ENCODE measurements at regions of chrX and their contacts with region 1.

Region 1: DNA sequence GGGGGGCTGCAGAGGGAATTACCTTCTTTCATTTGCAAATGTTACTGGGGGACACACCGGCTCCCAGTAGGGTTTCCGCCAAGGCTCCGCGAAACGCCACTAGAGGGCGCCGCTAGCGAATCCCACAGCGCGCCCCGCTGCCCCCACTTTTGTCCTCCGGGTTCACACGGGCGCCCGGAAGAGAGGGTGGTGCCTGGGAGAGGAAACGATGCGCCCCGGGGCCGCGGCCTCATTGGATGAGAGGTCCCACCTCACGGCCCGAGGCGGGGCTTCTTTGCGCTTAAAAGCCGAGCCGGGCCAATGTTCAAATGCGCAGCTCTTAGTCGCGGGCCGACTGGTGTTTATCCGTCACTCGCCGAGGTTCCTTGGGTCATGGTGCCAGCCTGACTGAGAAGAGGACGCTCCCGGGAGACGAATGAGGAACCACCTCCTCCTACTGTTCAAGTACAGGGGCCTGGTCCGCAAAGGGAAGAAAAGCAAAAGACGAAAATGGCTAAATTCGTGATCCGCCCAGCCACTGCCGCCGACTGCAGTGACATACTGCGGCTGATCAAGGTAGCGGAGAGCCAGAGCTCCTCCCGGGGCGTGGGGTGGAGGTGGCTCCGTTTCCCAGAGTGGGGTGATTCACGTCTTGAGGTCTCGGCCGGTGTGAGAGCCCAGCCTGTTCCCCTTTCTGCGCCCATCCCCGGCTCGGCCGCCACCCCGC is at the start of gene SAT1:
- DNase-seq: peak; percentile 96
- H3K4me3 Mint-ChIP-seq: peak within 1 kb of the TSS; percentile 84
- H3K27ac Mint-ChIP-seq: peak within 1 kb of the TSS; percentile 95
- H3K4me1 Mint-ChIP-seq: peaks cover 29% of the 10 kb centered on the region
- H3K27me3 Mint-ChIP-seq: no peaks in the 10 kb centered on the region
- total RNA-seq, gene SAT1: 629 to 649 TPM

Region 2: GRCh38 chrX:23263892-23264291 is 519.1 kb before region 1 on chrX:
- CTCF ChIA-PET with region 1: no interaction called
- intact Hi-C with region 1: no loop called
- DNase-seq: no peak
- H3K4me3 Mint-ChIP-seq: no peak overlapping the region
- H3K27ac Mint-ChIP-seq: no peak overlapping the region
- H3K4me1 Mint-ChIP-seq: no peaks in the 10 kb centered on the region
- H3K27me3 Mint-ChIP-seq: no peaks in the 10 kb centered on the region

Region 3: GRCh38 chrX:23644744-23645143 is 138.3 kb before region 1 on chrX:
- CTCF ChIA-PET with region 1: no interaction called
- intact Hi-C with region 1: no loop called
- DNase-seq: no peak
- H3K4me3 Mint-ChIP-seq: no peak overlapping the region
- H3K27ac Mint-ChIP-seq: no peak overlapping the region
- H3K4me1 Mint-ChIP-seq: no peaks in the 10 kb centered on the region
- H3K27me3 Mint-ChIP-seq: no peaks in the 10 kb centered on the region

Region 4: DNA sequence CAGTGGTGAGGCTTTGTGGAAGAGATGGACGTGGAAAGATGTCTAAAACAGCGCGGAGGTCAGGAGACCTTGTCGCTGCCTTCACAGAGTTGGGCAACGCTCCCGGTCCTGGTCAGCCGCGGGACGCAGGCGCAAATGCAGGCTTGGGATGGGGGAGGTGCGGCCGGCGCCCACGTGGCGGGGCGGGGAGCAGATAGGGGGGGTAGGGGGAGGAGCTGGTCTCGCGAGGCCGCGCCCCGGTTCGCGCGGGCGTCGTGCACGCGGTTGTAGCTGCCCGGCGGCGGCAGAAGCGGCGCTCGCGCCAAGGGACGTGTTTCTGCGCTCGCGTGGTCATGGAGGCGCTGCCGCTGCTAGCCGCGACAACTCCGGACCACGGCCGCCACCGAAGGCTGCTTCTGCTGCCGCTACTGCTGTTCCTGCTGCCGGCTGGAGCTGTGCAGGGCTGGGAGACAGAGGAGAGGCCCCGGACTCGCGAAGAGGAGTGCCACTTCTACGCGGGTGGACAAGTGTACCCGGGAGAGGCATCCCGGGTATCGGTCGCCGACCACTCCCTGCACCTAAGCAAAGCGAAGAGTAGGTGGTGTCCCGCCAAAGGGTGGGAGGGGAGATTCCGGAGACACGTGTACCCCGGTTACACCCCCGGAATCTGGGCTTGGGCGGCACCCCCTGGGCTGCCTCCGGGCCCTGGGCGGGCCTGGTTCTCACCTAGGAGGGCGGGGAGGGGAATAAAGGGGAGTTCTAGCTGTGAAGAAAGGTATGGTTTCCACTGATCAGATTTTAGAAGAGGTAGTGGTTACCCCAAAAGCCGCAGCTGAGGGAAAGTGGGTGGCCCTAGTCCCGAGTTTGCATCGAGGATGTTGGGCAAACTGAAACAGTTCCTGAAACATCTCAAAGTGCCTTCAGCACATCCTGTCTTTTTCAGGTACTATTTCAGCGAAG is 115.5 kb before region 1 on chrX and contains the start of gene PRDX4:
- CTCF ChIA-PET with region 1: no interaction called
- intact Hi-C with region 1: loop called (anchors 1 kb)
- DNase-seq: peak; percentile 82
- H3K4me3 Mint-ChIP-seq: peak within 1 kb of the TSS; percentile 84
- H3K27ac Mint-ChIP-seq: peak within 1 kb of the TSS; percentile 90
- H3K4me1 Mint-ChIP-seq: peaks cover 30% of the 10 kb centered on the region
- H3K27me3 Mint-ChIP-seq: no peaks in the 10 kb centered on the region
- total RNA-seq, gene PRDX4: 39.6 to 40.0 TPM

Region 5: GRCh38 chrX:23756157-23756559 is 26.9 kb before region 1 on chrX:
- CTCF ChIA-PET with region 1: interaction called, 8 read pairs
- intact Hi-C with region 1: loop called (anchors 1 kb)
- DNase-seq: peak; percentile 75
- H3K4me3 Mint-ChIP-seq: peak overlapping the region; percentile 24
- H3K27ac Mint-ChIP-seq: peak overlapping the region; percentile 66
- H3K4me1 Mint-ChIP-seq: peaks cover 8% of the 10 kb centered on the region
- H3K27me3 Mint-ChIP-seq: no peaks in the 10 kb centered on the region

Region 6: DNA sequence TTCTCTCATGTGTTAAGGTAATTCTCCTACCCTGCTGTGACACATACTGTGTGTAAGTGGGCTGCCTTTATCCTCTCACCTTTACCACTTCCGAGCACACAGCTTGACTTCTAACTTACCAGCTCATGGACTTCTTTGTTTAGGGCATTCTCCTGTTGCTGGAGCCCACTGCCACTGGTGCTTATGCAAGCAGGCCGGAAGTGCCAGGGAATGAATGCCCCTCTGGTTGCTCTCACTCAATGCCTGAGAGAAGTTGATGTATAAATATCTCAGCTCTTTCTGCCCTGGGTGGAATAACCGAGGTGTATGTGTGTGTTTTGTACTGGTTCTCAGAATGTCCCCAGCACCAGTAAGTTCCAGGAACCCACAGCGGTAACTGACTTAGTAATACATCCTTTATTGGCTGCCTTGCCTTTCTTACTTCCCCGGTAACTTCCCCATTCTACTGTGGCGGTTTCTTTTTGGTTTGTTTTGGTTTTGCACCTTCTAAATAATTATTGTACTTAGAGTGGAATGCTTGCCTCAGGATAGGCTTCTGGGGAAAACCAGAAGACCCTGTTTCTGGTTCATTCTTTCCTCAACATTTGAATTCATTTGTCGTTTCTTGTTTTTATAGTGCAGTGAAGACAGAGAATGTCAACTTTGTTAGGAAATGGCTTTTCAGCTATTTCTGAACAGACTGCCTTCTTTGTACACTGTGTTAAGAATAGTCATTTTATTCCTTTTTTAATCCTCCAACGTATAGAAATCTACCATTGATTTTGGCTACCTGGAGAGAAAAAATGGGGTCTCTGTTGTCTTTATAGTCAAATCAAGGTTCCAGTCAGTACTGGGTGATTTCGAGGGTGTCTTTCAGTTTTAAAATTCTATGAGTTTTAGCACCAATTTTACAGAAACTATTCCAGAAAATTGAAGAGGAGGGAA is 170.2 kb after region 1 on chrX:
- CTCF ChIA-PET with region 1: no interaction called
- intact Hi-C with region 1: loop called (anchors 1 kb)
- DNase-seq: peak; percentile 70
- H3K4me3 Mint-ChIP-seq: peak overlapping the region; percentile 79
- H3K27ac Mint-ChIP-seq: peak overlapping the region; percentile 97
- H3K4me1 Mint-ChIP-seq: peaks cover 16% of the 10 kb centered on the region
- H3K27me3 Mint-ChIP-seq: no peaks in the 10 kb centered on the region

Region 7: DNA sequence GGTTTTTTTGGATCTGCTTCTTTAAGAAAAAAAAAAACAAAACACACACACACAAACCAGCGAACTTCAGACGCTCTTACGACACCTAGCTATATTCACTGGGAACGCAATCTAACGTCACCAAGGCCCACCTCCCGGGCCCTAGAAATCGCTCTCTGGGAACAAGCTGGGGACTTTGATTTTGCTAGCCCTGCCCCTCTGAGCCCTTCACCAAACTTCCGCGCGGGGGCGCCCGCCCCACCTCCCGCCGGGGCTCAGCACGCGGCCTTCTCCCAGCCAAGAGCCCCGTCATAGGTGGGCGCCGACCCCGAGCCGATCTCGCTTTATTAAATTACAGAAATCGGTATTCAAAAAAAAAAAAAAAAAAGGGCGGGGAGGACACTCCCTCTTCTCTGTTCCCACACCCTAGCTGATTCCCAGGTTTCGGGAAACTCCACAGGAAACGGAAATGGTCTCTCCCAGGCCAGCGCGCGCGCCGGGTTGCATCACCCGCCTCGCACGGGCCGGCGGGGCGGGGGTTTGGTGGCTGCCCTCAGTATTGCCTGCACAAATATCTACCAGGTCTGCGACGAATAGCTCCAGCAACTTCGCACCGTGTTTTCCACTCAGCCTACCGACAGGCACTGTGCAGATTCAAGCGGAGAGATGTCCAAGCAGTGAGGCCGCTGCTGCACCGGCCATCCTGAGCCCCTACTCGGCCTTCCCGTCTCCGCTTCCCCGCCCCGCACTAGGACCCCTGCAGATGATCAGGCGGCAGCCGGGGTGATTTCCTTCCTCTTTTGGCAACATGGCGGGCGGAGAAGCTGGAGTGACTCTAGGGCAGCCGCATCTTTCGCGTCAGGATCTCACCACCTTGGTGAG is 271.4 kb after region 1 on chrX and contains the start of gene EIF2S3:
- CTCF ChIA-PET with region 1: interaction called, 5 read pairs
- intact Hi-C with region 1: loop called (anchors 1 kb)
- DNase-seq: peak; percentile 87
- H3K4me3 Mint-ChIP-seq: no peak within 1 kb of the TSS
- H3K27ac Mint-ChIP-seq: no peak within 1 kb of the TSS
- H3K4me1 Mint-ChIP-seq: peaks cover 10% of the 10 kb centered on the region
- H3K27me3 Mint-ChIP-seq: no peaks in the 10 kb centered on the region
- total RNA-seq, gene EIF2S3: 366 to 386 TPM

Region 8: DNA sequence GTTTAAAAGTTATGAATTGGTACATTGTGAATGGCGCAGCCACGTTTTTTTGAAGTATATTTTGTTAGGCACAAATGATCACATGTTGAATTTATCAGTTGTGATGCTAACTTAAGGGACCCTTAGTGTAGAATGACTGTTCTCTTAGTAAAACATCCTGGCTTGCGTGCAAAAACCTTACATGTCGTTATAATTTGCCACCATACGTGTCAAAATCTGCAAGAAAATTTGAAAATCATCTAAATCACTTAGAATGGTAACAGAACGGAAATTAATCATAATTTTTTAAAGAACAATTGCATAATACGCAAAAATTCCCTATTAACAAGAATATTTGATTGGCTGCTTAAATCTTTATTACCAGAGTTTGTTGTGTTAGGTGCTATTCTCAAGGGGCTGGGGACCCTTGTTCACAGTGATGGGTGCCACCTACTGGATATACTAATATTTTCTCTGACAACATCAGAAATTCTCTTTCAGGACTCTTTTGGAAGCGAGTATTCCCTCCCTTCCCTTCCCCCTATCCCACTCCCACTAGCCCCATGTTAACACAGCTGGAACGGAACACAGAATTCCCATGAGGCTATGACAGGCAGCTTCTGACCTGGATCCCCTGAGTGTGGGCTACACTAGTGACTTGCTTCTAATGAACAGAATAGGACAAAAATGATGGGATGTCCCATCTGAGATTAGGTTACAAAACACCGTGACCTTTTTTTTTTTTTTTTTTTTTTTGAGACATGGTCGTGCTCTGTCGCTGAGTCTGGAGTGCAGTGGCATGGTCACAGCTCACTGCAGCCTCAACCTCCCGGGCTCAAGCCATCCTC is 459.0 kb after region 1 on chrX:
- CTCF ChIA-PET with region 1: no interaction called
- intact Hi-C with region 1: loop called (anchors 2 kb)
- DNase-seq: peak; percentile 12
- H3K4me3 Mint-ChIP-seq: no peak overlapping the region
- H3K27ac Mint-ChIP-seq: no peak overlapping the region
- H3K4me1 Mint-ChIP-seq: peaks cover 11% of the 10 kb centered on the region
- H3K27me3 Mint-ChIP-seq: no peaks in the 10 kb centered on the region